CD8-positive, alpha-beta T cell (primary cell): ENCODE measurements at regions of chr18 and their contacts with region 1.

Region 1: GRCh38 chr18:30265190-30265589 is 777.4 kb downstream of the DSC3 start:
- DNase-seq: no peak
- ATAC-seq: no peak
- H3K4me3 ChIP-seq: no peak overlapping the region
- H3K4me3 Mint-ChIP-seq: no peak overlapping the region
- H3K27ac ChIP-seq: no peak overlapping the region
- H3K27ac Mint-ChIP-seq: no peak overlapping the region
- H3K4me1 ChIP-seq: no peaks in the 10 kb centered on the region
- H3K4me1 Mint-ChIP-seq: no peaks in the 10 kb centered on the region
- H3K27me3 ChIP-seq: no peaks in the 10 kb centered on the region
- H3K27me3 Mint-ChIP-seq: no peaks in the 10 kb centered on the region
- CTCF ChIP-seq: no peak

Region 2: GRCh38 chr18:30150586-30151250 is 114.5 kb before region 1 on chr18:
- CTCF ChIA-PET with region 1: no interaction called
- POLR2A ChIA-PET with region 1: no interaction called
- intact Hi-C with region 1: loop called in 1 of 2 experiments (anchors 10 kb)
- DNase-seq: no peak
- ATAC-seq: no peak
- H3K4me3 ChIP-seq: no peak overlapping the region
- H3K4me3 Mint-ChIP-seq: no peak overlapping the region
- H3K27ac ChIP-seq: no peak overlapping the region
- H3K27ac Mint-ChIP-seq: no peak overlapping the region
- H3K4me1 ChIP-seq: no peaks in the 10 kb centered on the region
- H3K4me1 Mint-ChIP-seq: no peaks in the 10 kb centered on the region
- H3K27me3 ChIP-seq: no peaks in the 10 kb centered on the region
- H3K27me3 Mint-ChIP-seq: no peaks in the 10 kb centered on the region
- CTCF ChIP-seq: no peak

Region 3: GRCh38 chr18:30288662-30289414 is 23.6 kb after region 1 on chr18:
- CTCF ChIA-PET with region 1: no interaction called
- POLR2A ChIA-PET with region 1: no interaction called
- intact Hi-C with region 1: no loop called
- DNase-seq: no peak
- ATAC-seq: no peak
- H3K4me3 ChIP-seq: no peak overlapping the region
- H3K4me3 Mint-ChIP-seq: no peak overlapping the region
- H3K27ac ChIP-seq: no peak overlapping the region
- H3K27ac Mint-ChIP-seq: no peak overlapping the region
- H3K4me1 ChIP-seq: no peaks in the 10 kb centered on the region
- H3K4me1 Mint-ChIP-seq: no peaks in the 10 kb centered on the region
- H3K27me3 ChIP-seq: no peaks in the 10 kb centered on the region
- H3K27me3 Mint-ChIP-seq: no peaks in the 10 kb centered on the region
- CTCF ChIP-seq: no peak